ENCODE measurements at regions of chr19 and their contacts with region 1.

Region 1: DNA sequence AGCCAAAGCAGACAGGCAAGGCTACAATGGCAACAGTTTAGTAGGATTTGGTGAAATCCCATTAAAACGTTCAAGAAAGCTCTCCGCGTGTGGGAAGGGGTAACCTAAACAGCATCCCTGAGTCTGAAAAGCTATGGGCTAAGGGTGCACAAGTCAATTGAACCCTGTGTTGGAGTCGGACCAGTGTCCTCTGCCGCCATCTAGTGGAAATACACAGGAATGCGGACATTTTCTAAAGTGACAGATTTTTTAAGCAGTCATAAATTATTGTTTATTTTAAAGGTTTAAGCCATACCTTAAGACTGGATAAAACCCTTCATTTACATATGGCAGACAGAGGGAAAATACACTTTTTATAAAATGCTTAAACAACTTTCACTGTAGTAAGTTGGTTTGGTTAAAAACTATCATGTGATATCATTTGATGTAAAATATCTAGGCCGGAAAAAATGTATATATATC is 26.5 kb upstream of the LSM14A start:
- DNase-seq: peak; percentile 72
- ATAC-seq: peak; percentile 79
- H3K4me3 Mint-ChIP-seq: no peak overlapping the region
- H3K27ac Mint-ChIP-seq: no peak overlapping the region
- H3K4me1 Mint-ChIP-seq: no peaks in the 10 kb centered on the region
- H3K27me3 Mint-ChIP-seq: no peaks in the 10 kb centered on the region

Region 2: GRCh38 chr19:33795370-33796163 is 350.2 kb before region 1 on chr19:
- CTCF ChIA-PET with region 1: interaction called, 3 read pairs
- POLR2A ChIA-PET with region 1: no interaction called
- intact Hi-C with region 1: loop called in 1 of 2 experiments (anchors 5 kb)
- DNase-seq: peak; percentile 77
- ATAC-seq: peak; percentile 59
- H3K4me3 Mint-ChIP-seq: peak overlapping the region; percentile 72
- H3K27ac Mint-ChIP-seq: no peak overlapping the region
- H3K4me1 Mint-ChIP-seq: peaks cover 2% of the 10 kb centered on the region
- H3K27me3 Mint-ChIP-seq: peaks cover 24% of the 10 kb centered on the region

Region 3: DNA sequence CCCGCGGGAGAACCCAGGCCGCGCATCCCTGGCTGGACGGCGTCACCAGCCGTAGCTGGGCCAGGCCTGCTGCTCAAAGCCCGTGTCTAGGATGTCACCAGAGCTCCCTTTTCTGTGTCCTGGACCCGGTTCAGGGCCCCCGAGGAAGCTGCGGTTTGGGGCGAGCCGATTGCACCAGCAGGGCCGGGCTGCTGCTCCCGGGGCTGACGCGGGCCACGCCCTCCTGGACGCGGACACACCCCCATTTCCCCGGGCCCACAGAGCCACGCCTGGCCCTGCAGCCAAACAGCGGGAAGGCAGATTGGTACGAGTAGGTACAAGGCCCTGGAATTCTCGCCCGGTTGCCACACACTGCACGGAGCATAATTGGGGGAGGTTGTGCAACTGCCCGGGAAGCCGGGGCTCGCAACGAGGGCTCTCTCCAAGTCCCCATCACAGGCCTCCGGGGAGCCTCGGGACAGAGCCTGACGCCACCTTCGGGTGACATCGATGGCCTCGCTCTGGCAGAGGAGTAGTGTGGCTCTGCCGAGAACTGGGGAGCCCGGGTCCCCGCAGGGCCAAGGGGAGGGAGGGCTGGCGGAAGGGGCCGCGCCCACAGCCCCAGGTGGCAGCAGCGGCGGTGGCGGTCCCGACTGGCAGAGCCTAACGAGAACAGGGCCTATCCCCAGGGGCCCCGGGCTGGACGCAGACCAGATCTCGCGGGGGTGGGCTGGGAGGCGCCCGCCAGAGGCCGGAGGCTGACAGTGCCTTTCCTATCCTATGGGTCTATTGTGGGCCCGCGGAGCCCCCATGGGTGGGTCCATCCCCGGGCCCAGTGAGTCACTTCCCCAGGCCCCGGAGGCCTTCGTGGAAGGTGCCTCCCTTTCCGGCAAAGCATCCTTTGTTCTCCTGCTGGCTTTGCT is 325.6 kb before region 1 on chr19:
- CTCF ChIA-PET with region 1: no interaction called
- POLR2A ChIA-PET with region 1: no interaction called
- intact Hi-C with region 1: loop called in 1 of 2 experiments (anchors 1 kb)
- DNase-seq: peak; percentile 84
- ATAC-seq: peak; percentile 86
- H3K4me3 Mint-ChIP-seq: peak overlapping the region; percentile 71
- H3K27ac Mint-ChIP-seq: peak overlapping the region; percentile 77
- H3K4me1 Mint-ChIP-seq: peaks cover 17% of the 10 kb centered on the region
- H3K27me3 Mint-ChIP-seq: no peaks in the 10 kb centered on the region

Region 4: GRCh38 chr19:34041925-34042521 is 103.7 kb before region 1 on chr19:
- CTCF ChIA-PET with region 1: interaction called, 27 read pairs
- POLR2A ChIA-PET with region 1: no interaction called
- intact Hi-C with region 1: loop called (anchors 1 kb)
- DNase-seq: peak; percentile 91
- ATAC-seq: peak; percentile 71
- H3K4me3 Mint-ChIP-seq: no peak overlapping the region
- H3K27ac Mint-ChIP-seq: no peak overlapping the region
- H3K4me1 Mint-ChIP-seq: peaks cover 3% of the 10 kb centered on the region
- H3K27me3 Mint-ChIP-seq: peaks cover 10% of the 10 kb centered on the region

Region 5: DNA sequence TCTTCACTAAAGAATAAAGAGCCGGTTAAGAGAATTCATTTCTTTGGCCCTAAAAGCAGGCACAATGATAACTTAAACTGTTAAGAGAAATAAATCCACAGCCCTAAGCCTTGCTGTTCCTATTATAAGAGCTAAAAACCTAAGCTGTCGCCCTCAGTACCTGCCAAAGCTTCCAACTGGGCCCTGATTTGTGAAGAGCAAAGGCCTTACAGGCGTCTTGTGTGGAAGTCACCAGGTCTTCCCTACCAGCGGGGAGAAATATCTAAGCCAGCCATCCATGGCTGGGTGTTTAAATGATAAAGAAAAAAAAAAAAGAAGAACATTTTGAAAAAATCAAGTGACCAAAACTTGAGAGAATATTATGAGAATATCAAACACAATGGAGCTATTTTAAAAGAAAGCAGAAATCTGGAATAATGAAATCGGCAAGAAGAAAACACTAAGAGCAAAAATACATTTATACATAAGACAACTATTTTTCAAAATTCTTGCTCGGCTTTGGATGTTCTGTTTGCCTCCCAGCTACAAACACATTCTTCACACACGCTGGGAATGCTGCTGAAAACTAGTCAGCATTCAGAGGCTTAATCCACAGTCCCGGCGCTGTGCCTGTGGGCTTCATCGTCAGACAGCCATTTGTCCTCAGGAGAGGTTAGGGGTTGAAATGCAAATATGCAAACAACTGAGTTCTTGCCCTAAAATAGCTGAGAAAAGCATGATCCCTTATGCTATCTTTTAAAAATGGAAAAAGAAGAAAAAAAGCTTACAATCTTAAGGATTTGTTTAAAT is 63.3 kb before region 1 on chr19:
- CTCF ChIA-PET with region 1: no interaction called
- POLR2A ChIA-PET with region 1: no interaction called
- intact Hi-C with region 1: no loop called
- DNase-seq: no peak
- ATAC-seq: no peak
- H3K4me3 Mint-ChIP-seq: no peak overlapping the region
- H3K27ac Mint-ChIP-seq: no peak overlapping the region
- H3K4me1 Mint-ChIP-seq: no peaks in the 10 kb centered on the region
- H3K27me3 Mint-ChIP-seq: peaks cover 9% of the 10 kb centered on the region

Region 6: DNA sequence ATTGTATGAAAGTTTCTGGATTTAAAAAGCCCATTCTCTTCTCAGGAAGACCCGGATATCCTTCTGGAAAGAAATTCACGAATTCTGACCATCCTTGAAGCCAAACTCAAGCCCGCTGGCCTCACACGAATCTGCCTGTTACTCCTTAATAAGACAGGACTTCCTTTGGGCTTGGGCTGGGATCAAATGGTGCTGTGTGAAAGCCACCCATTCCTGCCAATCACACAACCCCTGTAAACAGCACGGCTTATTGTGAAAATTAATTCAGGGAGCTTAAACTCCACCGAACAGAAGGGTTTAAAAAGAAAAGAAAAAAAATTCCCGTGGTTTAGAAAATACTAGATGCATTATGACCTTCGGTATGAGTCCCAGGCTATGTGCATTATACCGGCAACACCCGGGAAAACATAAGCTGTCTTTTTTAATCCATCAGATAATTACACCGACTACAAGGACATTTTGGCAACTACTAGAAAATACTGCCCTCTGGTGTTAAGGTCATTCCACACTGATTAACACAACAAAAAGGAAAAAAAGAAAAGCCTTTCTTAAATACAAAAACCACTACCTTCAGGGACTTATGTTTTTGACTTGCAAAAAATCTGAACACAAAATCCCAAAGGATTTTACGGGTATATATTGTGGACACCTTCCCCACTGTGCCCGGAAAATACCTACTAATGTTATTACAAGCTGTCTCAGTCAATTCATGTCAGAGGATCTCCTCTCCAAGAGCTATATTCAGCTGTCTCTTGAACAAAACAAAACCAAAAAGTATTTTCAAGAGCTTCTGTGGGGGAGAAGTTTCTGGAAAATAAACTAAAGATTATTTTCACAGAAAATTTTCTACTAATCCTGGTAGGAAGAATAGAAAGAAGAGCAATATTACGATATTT is 49.5 kb before region 1 on chr19:
- CTCF ChIA-PET with region 1: interaction called, 9 read pairs
- POLR2A ChIA-PET with region 1: no interaction called
- intact Hi-C with region 1: loop called in 1 of 2 experiments (anchors 1 kb)
- DNase-seq: no peak
- ATAC-seq: no peak
- H3K4me3 Mint-ChIP-seq: no peak overlapping the region
- H3K27ac Mint-ChIP-seq: no peak overlapping the region
- H3K4me1 Mint-ChIP-seq: no peaks in the 10 kb centered on the region
- H3K27me3 Mint-ChIP-seq: peaks cover 8% of the 10 kb centered on the region

Region 7: DNA sequence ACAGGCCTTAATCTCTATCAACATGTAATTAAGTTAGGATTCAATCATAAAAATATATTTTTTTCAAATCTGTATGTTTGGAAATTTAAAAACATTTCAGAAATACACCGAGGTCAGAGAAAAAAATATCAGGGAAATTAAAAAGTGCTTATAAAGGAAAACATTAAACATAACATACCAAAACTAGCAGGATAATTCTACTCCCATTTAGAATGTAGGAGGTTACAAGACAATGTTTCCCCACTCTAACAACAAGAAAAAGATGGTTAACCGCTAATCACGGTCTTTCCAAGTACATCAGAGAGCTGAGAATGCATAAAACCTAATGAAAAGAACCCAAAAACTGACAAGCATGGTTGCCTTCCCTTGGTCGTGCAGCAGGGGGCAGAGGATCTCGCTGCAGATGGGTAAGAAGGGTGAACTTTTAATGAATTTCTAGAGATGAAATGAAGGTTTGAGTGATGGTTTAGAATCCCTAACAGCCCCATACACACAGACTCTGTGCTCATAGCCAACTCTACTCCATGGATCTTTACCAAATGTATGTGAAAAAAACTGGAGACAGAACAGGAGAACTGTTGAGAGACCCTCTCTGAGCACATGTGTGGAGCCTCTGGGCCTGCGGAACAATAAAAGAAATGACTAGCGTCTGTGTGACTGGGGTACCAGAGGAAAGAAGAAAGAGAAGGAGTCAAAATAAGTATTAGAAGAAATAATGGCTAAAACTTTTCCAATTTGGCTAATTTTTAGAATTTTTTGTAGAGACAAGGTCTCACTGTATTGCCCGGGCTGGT is 24.7 kb before region 1 on chr19:
- CTCF ChIA-PET with region 1: interaction called, 51 read pairs
- POLR2A ChIA-PET with region 1: no interaction called
- intact Hi-C with region 1: loop called (anchors 1 kb)
- DNase-seq: peak; percentile 78
- ATAC-seq: peak; percentile 84
- H3K4me3 Mint-ChIP-seq: no peak overlapping the region
- H3K27ac Mint-ChIP-seq: no peak overlapping the region
- H3K4me1 Mint-ChIP-seq: peaks cover 20% of the 10 kb centered on the region
- H3K27me3 Mint-ChIP-seq: no peaks in the 10 kb centered on the region

Region 8: GRCh38 chr19:34184880-34185491 is 39.2 kb after region 1 on chr19:
- CTCF ChIA-PET with region 1: no interaction called
- POLR2A ChIA-PET with region 1: no interaction called
- intact Hi-C with region 1: no loop called
- DNase-seq: no peak
- ATAC-seq: peak; percentile 13
- H3K4me3 Mint-ChIP-seq: peak overlapping the region; percentile 0
- H3K27ac Mint-ChIP-seq: peak overlapping the region; percentile 73
- H3K4me1 Mint-ChIP-seq: peaks cover 78% of the 10 kb centered on the region
- H3K27me3 Mint-ChIP-seq: no peaks in the 10 kb centered on the region

Measured in activated CD4-positive, alpha-beta T cell treated with anti-CD3 and anti-CD28 coated beads for 36 hours (primary cell).